Sciatic nerve (tissue), 2 donors: ENCODE measurements at regions of chr1 and their contacts with region 1.

Region 1: GRCh38 chr1:232344791-232345399 is 285.0 kb downstream of the SIPA1L2 start:
- DNase-seq: no peak
- ATAC-seq: no peak

Region 2: DNA sequence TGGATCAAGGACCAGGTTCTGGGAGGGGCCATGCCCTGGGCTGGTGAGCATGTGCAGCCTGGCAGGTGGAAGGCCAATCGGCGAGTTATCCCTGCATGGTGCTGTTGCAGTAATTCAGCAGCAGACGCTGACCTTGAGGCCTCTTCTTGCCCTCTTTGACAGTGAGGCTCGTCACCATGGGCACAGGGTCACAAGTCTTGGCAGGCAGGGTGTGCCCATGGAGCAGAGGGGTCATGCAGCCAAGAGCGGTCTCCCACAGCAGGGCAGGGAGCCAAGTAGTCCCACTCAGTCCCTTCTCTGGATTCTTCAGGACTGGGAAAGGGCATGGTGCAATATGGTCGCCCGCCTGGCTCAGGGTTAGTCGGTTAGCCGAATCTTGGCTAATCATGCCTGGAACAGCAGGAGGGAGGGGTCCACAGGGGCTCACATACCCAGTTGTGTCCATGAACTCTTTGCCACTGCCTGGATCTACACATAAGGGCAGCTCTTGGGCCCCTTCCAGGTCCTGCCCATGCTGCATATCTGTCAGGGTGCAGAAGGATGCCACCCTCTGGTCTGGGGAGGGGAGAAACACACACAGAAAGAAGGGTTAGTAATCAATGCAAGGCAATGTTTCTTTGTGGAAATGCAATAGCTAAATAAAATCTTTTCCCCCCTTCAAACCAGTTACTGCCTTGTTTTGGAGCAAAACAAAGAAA is 58.3 kb after region 1 on chr1:
- intact Hi-C with region 1: no loop called
- DNase-seq: no peak
- ATAC-seq: no peak

Region 3: DNA sequence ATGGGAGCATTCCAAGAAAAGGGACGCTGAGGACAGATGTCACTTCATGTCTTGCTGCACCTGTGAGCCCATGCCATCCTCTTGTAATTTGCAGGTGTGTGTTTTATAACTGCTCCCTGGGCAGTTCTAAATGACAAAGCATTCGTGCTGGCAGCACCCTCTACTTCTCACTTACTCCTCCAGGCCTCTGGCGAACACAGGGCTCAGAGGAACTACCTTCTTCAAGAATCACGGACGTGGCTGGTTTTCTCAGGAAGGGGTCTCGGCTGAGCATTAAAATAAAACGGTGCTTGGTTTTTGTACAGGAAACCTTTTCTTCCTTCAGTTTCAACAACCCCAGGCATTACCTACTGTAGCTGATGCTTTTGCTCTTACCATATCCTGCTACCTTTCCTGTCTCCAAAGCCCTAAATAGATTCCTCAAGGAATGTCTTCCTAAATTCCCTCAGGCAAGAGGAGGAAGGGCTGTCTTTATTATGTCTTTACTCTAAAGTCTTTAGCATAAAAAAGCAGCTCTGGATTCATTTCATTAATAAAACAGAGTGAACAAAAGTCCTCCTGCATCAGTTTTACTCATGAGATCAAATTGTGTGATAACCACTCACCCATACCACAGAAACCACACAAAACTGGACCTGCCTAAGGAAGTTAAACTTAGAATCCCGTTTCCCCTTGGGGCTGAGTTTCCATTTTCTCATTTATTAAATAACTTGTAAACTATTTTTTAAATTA is 381.3 kb after region 1 on chr1:
- intact Hi-C with region 1: no loop called
- DNase-seq: no peak
- ATAC-seq: no peak

Region 4: DNA sequence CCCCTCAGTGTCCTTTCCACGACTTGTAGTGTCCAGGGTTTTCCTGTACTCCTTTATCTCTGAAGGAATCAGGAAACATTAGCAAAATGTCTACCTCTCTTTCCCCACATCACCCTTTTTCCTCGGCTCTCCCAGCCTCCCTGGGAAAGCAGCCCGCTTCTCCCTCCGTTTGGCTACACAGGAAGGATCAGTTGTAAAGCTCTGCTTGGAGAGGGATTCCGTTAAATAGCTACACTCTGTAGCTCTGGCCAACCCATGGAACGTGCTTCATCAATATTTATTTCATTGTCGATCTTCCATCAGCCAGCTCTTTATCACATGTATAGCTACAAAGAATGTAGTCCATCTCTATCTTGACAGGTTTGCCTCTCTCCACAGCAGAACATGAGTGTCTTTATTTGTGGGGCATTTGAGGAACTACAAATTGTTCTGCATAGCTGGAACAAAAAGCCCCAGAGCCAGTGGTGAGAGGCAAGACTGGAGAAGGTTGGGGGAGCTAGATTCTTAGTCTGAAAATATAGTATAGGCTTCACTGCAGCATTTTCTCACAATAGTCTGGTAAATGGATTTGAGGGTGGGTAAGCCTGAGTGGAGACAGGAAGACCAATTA is 1751.4 kb after region 1 on chr1:
- intact Hi-C with region 1: loop called (anchors 5 kb)
- DNase-seq: no peak
- ATAC-seq: no peak